ENCODE measurements at regions of chr7 and their contacts with region 1.

Region 1: GRCh38 chr7:102279537-102280400 is 6.9 kb upstream of the SH2B2 start:
- DNase-seq: peak; percentile 35 to 63 (median 54)
- ATAC-seq: peak; percentile 87
- H3K4me3 ChIP-seq: no peak overlapping the region
- H3K4me3 Mint-ChIP-seq: no peak overlapping the region
- H3K27ac ChIP-seq: no peak overlapping the region
- H3K27ac Mint-ChIP-seq: peak overlapping the region in 1 of 9 donors; percentile 17
- H3K4me1 ChIP-seq: peaks cover 3 to 5% of the 10 kb centered on the region in 2 donors
- H3K4me1 Mint-ChIP-seq: peaks cover 4 to 15% (median 4%) of the 10 kb centered on the region in 7 donors
- H3K27me3 ChIP-seq: no peaks in the 10 kb centered on the region
- H3K27me3 Mint-ChIP-seq: peaks cover 0 to 7% (median 0%) of the 10 kb centered on the region in 5 donors

Region 2: DNA sequence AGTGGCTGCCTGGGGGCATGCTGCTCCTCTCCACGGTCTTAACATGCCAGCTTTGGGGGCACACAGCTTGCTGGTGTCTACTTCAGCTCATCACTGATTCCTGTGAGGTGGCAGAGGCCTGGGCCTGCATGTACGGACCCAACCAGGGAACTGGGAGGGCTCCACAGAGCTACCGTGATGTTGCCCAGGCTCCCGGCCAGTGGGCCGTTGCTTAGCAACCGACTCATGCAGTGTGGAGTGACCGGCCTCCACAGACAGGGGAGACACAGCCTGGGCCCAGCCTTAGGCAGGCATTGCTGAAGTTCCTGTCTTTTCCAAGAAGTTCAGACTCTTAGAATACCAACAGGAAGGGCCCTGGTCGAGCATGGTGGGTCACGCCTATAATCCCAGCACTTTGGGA is 18.9 kb before region 1 on chr7:
- CTCF ChIA-PET with region 1: no interaction called
- POLR2A ChIA-PET with region 1: no interaction called
- intact Hi-C with region 1: no loop called
- DNase-seq: no peak
- ATAC-seq: no peak
- H3K4me3 ChIP-seq: no peak overlapping the region
- H3K4me3 Mint-ChIP-seq: no peak overlapping the region
- H3K27ac ChIP-seq: no peak overlapping the region
- H3K27ac Mint-ChIP-seq: no peak overlapping the region
- H3K4me1 ChIP-seq: no peaks in the 10 kb centered on the region
- H3K4me1 Mint-ChIP-seq: peaks cover 0 to 3% (median 0%) of the 10 kb centered on the region in 7 donors
- H3K27me3 ChIP-seq: no peaks in the 10 kb centered on the region
- H3K27me3 Mint-ChIP-seq: no peaks in the 10 kb centered on the region

Region 3: GRCh38 chr7:102390697-102391484 is 111.1 kb after region 1 on chr7:
- CTCF ChIA-PET with region 1: interaction called, 12 read pairs
- POLR2A ChIA-PET with region 1: interaction called, 6 read pairs
- intact Hi-C with region 1: loop called in 1 of 2 experiments (anchors 1 kb)
- DNase-seq: peak; percentile 37 to 72 (median 60)
- ATAC-seq: peak; percentile 84
- H3K4me3 ChIP-seq: no peak overlapping the region
- H3K4me3 Mint-ChIP-seq: no peak overlapping the region
- H3K27ac ChIP-seq: no peak overlapping the region
- H3K27ac Mint-ChIP-seq: no peak overlapping the region
- H3K4me1 ChIP-seq: peaks cover 0 to 6% of the 10 kb centered on the region in 2 donors
- H3K4me1 Mint-ChIP-seq: peaks cover 5 to 7% (median 6%) of the 10 kb centered on the region in 7 donors
- H3K27me3 ChIP-seq: no peaks in the 10 kb centered on the region
- H3K27me3 Mint-ChIP-seq: no peaks in the 10 kb centered on the region

Region 4: GRCh38 chr7:102450242-102450641 is 170.5 kb after region 1 on chr7:
- CTCF ChIA-PET with region 1: no interaction called
- POLR2A ChIA-PET with region 1: no interaction called
- intact Hi-C with region 1: loop called in 1 of 2 experiments (anchors 1 kb)
- DNase-seq: peak in 7 of 9 donors; percentile 50 to 65 (median 57)
- ATAC-seq: peak; percentile 91
- H3K4me3 ChIP-seq: no peak overlapping the region
- H3K4me3 Mint-ChIP-seq: no peak overlapping the region
- H3K27ac ChIP-seq: no peak overlapping the region
- H3K27ac Mint-ChIP-seq: peak overlapping the region in 5 of 9 donors; percentile 36 to 75 (median 62)
- H3K4me1 ChIP-seq: no peaks in the 10 kb centered on the region
- H3K4me1 Mint-ChIP-seq: peaks cover 0 to 5% (median 2%) of the 10 kb centered on the region in 7 donors
- H3K27me3 ChIP-seq: no peaks in the 10 kb centered on the region
- H3K27me3 Mint-ChIP-seq: no peaks in the 10 kb centered on the region

Measured in naive thymus-derived CD4-positive, alpha-beta T cell (primary cell).